OCI-LY7 (cell line): ENCODE measurements at regions of chr21 and their contacts with region 1.

Region 1: DNA sequence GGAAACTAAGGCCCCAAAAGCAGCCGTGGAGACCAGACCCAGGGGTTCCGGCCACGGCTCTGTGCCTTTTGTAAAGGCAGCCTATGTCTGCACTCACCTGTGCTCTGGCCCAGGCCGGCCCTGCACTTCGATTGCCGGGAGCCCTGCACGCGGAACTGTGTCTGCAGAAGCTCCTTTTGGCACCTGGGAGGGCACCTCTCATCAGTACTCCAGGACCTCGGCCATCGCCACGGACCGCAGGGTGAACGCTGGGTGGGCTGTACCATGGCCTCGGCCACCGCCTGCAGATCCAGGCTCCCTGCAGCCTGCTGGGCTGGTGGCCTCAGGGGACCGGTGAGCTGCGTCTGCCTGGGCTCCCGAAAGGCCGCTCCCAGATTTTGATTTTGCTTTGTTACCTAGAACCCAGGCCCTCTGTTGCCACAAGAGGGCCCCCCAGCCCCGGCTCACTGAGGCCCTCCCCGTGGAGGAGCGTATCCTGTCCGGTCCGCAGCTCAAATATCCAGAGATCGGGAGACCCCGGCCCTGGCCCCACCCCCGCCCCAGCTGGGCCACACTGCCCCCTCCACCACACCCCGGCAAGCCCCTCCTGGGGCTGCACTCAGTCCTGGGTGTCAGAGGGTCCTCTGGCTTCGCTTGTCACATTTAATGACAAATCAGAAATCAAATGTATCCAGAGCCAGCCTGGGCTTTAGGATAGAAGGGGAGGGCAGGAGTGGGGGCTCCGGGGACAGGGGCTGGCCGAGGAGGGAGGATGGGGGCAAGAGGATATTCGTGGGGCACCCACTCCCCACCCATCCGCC is 60.2 kb upstream of the PDE9A start:
- DNase-seq: peak; percentile 80
- H3K4me3 ChIP-seq: no peak overlapping the region
- H3K27ac ChIP-seq: no peak overlapping the region
- H3K4me1 ChIP-seq: peaks cover 23% of the 10 kb centered on the region
- CTCF ChIP-seq: peak; percentile 90

Region 2: GRCh38 chr21:42621166-42621818 is 28.1 kb after region 1 on chr21:
- CTCF ChIA-PET with region 1: no interaction called
- POLR2A ChIA-PET with region 1: no interaction called
- intact Hi-C with region 1: no loop called
- DNase-seq: no peak
- H3K4me3 ChIP-seq: no peak overlapping the region
- H3K27ac ChIP-seq: no peak overlapping the region
- H3K4me1 ChIP-seq: no peaks in the 10 kb centered on the region
- CTCF ChIP-seq: no peak

Region 3: GRCh38 chr21:42652527-42653230 is 59.5 kb after region 1 on chr21:
- CTCF ChIA-PET with region 1: no interaction called
- POLR2A ChIA-PET with region 1: no interaction called
- intact Hi-C with region 1: loop called (anchors 5 kb)
- DNase-seq: no peak
- H3K4me3 ChIP-seq: peak overlapping the region; percentile 46
- H3K27ac ChIP-seq: no peak overlapping the region
- H3K4me1 ChIP-seq: peaks cover 42% of the 10 kb centered on the region
- CTCF ChIP-seq: no peak; the same call in 1 of the 2 replicates

Region 4: GRCh38 chr21:42724226-42724920 is 131.2 kb after region 1 on chr21:
- CTCF ChIA-PET with region 1: no interaction called
- POLR2A ChIA-PET with region 1: no interaction called
- intact Hi-C with region 1: loop called (anchors 10 kb)
- DNase-seq: no peak
- H3K4me3 ChIP-seq: no peak overlapping the region
- H3K27ac ChIP-seq: no peak overlapping the region
- H3K4me1 ChIP-seq: no peaks in the 10 kb centered on the region
- CTCF ChIP-seq: no peak

Region 5: DNA sequence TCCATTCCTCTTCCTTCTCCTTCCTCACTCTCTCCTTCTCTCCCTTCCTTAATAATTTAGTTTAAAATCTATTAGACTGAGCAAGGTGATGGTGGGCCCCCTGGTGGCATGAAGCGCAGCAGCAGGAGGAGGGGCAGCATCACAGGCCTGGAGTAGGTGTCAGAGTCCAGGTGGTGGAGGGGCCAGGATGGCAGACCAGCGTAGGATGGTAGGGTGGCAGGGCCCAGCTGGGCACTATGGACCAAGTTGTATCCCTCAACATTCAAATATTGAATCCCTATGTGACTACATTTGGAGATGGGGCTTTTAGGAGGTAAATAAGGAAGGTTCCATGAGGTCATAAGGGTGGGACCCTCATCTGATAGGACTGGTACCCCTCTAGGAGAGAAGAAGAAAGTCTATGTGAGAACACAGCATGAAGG is 225.1 kb after region 1 on chr21:
- CTCF ChIA-PET with region 1: no interaction called
- POLR2A ChIA-PET with region 1: no interaction called
- intact Hi-C with region 1: loop called (anchors 5 kb)
- DNase-seq: peak; percentile 41
- H3K4me3 ChIP-seq: no peak overlapping the region
- H3K27ac ChIP-seq: no peak overlapping the region
- H3K4me1 ChIP-seq: no peaks in the 10 kb centered on the region
- CTCF ChIP-seq: peak; percentile 89

Region 6: GRCh38 chr21:42833439-42833815 is 240.2 kb after region 1 on chr21:
- CTCF ChIA-PET with region 1: no interaction called
- POLR2A ChIA-PET with region 1: no interaction called
- intact Hi-C with region 1: loop called (anchors 5 kb)
- DNase-seq: peak; percentile 64
- H3K4me3 ChIP-seq: no peak overlapping the region
- H3K27ac ChIP-seq: no peak overlapping the region
- H3K4me1 ChIP-seq: no peaks in the 10 kb centered on the region
- CTCF ChIP-seq: peak; percentile 70